ENCODE measurements at regions of chr12 and their contacts with region 1.

Region 1: GRCh38 chr12:68119724-68120211 is 39.8 kb downstream of the IFNG start:
- DNase-seq: peak; percentile 62
- H3K4me3 Mint-ChIP-seq: peak overlapping the region; percentile 11
- H3K27ac Mint-ChIP-seq: peak overlapping the region; percentile 77
- H3K4me1 Mint-ChIP-seq: peaks cover 38% of the 10 kb centered on the region
- H3K27me3 Mint-ChIP-seq: no peaks in the 10 kb centered on the region

Region 2: GRCh38 chr12:67452119-67452805 is 667.5 kb before region 1 on chr12:
- intact Hi-C with region 1: loop called (anchors 1 kb)
- DNase-seq: no peak
- H3K4me3 Mint-ChIP-seq: no peak overlapping the region
- H3K27ac Mint-ChIP-seq: peak overlapping the region; percentile 64
- H3K4me1 Mint-ChIP-seq: peaks cover 37% of the 10 kb centered on the region
- H3K27me3 Mint-ChIP-seq: peaks cover 38% of the 10 kb centered on the region

Region 3: GRCh38 chr12:67804168-67804567 is 315.6 kb before region 1 on chr12:
- intact Hi-C with region 1: loop called (anchors 1 kb)
- DNase-seq: peak; percentile 26
- H3K4me3 Mint-ChIP-seq: no peak overlapping the region
- H3K27ac Mint-ChIP-seq: no peak overlapping the region
- H3K4me1 Mint-ChIP-seq: peaks cover 29% of the 10 kb centered on the region
- H3K27me3 Mint-ChIP-seq: peaks cover 2% of the 10 kb centered on the region

Region 4: DNA sequence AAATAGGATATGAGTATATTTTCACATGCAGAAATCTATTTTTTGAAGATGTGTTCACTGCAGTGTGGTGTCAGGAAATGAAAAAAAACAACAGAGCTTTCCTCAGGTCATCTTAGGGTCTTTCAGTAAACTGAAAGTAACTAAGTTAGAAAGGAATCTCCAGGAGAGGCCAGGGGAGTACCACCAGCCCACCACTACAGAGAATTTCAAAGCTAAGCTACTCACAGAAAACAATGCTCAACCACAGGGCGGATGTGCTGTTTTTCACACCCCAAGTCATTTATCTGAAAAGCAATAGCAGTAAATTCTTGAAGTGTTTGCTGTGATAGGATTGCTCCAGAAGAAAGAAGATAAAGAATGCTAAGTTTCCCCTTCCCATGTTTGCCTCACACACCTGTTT is 39.2 kb before region 1 on chr12:
- intact Hi-C with region 1: no loop called
- DNase-seq: no peak
- H3K4me3 Mint-ChIP-seq: no peak overlapping the region
- H3K27ac Mint-ChIP-seq: no peak overlapping the region
- H3K4me1 Mint-ChIP-seq: peaks cover 11% of the 10 kb centered on the region
- H3K27me3 Mint-ChIP-seq: no peaks in the 10 kb centered on the region

Region 5: DNA sequence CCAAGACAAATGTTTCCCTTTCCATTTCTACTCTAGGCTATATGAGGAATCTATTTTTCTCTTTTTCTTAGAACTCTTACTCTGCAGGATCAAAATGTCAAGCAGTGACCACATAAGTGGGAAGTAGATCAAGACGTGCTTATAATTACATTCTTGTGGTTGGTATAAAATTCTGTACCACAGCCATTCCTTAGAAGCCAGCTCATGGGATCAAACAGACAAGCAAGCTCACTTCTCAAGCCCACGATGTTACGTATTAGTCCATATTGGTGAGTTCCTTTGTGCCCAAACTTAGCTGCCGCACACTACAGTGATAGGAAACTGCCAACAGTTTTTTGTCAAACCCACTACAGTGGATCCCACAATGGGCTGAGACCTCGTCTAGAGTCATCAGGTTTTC is 13.6 kb before region 1 on chr12:
- intact Hi-C with region 1: loop called (anchors 1 kb)
- DNase-seq: no peak
- H3K4me3 Mint-ChIP-seq: no peak overlapping the region
- H3K27ac Mint-ChIP-seq: no peak overlapping the region
- H3K4me1 Mint-ChIP-seq: peaks cover 3% of the 10 kb centered on the region
- H3K27me3 Mint-ChIP-seq: peaks cover 2% of the 10 kb centered on the region

Region 6: GRCh38 chr12:68180792-68181744 is 61.3 kb after region 1 on chr12:
- intact Hi-C with region 1: loop called (anchors 1 kb)
- DNase-seq: peak; percentile 34
- H3K4me3 Mint-ChIP-seq: no peak overlapping the region
- H3K27ac Mint-ChIP-seq: peak overlapping the region; percentile 61
- H3K4me1 Mint-ChIP-seq: peaks cover 38% of the 10 kb centered on the region
- H3K27me3 Mint-ChIP-seq: peaks cover 31% of the 10 kb centered on the region

Region 7: DNA sequence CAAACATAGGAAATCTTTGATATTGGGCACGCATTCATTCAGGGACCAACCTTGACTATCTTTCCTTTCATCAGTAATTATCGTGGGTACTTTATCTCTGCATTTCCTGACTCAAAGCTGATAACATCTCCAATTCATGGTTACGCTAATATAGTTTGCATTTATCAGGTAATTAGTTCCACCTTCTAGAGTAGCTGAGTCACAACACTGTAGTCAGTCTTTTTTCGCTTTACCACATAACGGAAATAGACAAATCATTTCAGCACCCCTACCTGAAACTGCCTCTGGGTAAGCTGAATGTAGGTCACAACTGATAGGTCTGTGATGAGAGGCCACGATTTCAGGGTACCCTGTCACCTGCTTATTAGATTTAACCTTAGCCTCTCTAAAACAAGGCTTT is 170.4 kb after region 1 on chr12:
- intact Hi-C with region 1: loop called (anchors 2 kb)
- DNase-seq: peak; percentile 36
- H3K4me3 Mint-ChIP-seq: no peak overlapping the region
- H3K27ac Mint-ChIP-seq: no peak overlapping the region
- H3K4me1 Mint-ChIP-seq: peaks cover 35% of the 10 kb centered on the region
- H3K27me3 Mint-ChIP-seq: peaks cover 28% of the 10 kb centered on the region

Region 8: DNA sequence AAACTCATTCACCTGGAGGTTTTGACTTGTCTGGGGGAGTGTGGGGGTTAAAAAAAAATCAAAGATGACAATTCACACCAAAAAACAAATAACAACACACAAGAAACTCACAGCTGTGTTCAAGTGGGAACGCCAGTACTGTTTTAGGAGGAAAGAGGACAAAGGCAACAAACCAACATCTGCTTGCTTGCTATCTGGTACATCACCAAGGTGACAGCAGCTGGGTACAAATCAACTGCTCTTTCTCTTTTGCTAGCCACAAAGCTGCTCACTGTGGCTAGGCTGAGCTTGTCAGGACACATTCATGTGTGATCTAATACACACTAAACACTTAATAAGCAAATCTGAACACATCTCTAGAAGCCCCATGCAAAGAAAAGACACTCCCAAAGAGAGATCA is 362.9 kb after region 1 on chr12:
- intact Hi-C with region 1: loop called (anchors 10 kb)
- DNase-seq: peak; percentile 38
- H3K4me3 Mint-ChIP-seq: peak overlapping the region; percentile 9
- H3K27ac Mint-ChIP-seq: peak overlapping the region; percentile 93
- H3K4me1 Mint-ChIP-seq: peaks cover 42% of the 10 kb centered on the region
- H3K27me3 Mint-ChIP-seq: no peaks in the 10 kb centered on the region